HepG2 (cell line): ENCODE measurements at regions of chr14 and their contacts with region 1.

Region 1: DNA sequence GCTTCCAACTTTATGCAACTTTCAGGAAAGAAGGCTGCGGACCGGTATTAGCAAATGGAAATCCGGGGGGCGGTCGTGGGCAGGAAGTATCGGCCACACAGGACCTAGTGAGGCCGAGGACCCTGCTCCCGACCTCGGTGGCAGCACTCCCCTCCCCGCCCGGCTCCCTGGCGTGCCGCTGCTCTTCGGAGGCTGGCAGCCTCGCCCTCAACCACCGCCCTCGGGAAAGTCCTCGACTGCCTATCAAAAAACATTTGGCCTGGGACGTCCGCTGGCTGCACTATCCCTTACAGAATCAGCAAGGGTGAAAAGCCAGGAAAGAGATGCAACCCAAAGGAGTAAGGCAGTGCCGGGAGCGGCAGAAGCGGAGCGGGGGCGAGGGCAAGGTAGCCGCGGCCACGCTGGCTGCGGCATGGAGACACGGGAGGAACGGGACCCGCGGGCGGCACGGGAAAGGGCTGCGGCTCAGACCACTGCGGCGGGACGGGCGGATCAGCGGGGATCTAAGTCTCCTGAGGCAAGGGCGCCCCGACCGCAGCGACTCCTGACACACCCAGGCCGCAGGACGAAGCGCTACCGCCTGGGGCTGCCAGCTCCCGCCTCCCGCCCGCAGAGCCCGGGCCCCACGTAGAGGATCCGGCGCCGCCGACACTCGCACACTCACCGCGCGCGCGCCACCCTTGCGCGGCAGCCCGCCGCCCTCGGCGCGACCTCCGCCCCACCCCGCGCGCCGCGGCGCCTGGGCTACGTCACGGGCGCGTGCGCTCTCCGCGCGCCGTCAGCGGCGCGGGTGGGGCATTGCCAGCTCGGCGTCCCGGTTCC is at the starts of genes BBOF1 and ENTPD5:
- DNase-seq: peak; percentile 61
- ATAC-seq: peak; percentile 86
- H3K4me3 ChIP-seq: peak within 1 kb of the TSS; percentile 82 to 91 (median 89)
- H3K27ac ChIP-seq: peak within 1 kb of the TSS; percentile 96
- H3K4me1 ChIP-seq: peaks cover 70% of the 10 kb centered on the region
- H3K27me3 ChIP-seq: no peaks in the 10 kb centered on the region
- CTCF ChIP-seq: 0 out of 2 replicates have a peak, but pooled peaks have one; percentile 2
- EP300 ChIP-seq: no peak
- POLR2A ChIP-seq: peak; percentile 77 to 83; a peak in 3 of 4 replicates
- RAD21 ChIP-seq: no peak; the same call in none of the 2 replicates
- total RNA-seq, gene BBOF1: 2.3 and 2.4 TPM in 2 replicates
- total RNA-seq, gene ENTPD5: 20.6 and 33.8 TPM in 2 replicates

Region 2: GRCh38 chr14:73825551-73826188 is 193.1 kb before region 1 on chr14:
- CTCF ChIA-PET with region 1: no interaction called
- POLR2A ChIA-PET with region 1: no interaction called
- in situ Hi-C with region 1: no loop called
- intact Hi-C with region 1: no loop called
- DNase-seq: peak; percentile 69
- ATAC-seq: peak; percentile 92
- H3K4me3 ChIP-seq: no peak overlapping the region
- H3K27ac ChIP-seq: no peak overlapping the region
- H3K4me1 ChIP-seq: peaks cover 15% of the 10 kb centered on the region
- H3K27me3 ChIP-seq: peaks cover 0 to 2% of the 10 kb centered on the region in 2 experiments; a peak in 2 of 5 replicates
- CTCF ChIP-seq: peak; percentile 90
- EP300 ChIP-seq: no peak
- POLR2A ChIP-seq: no peak
- RAD21 ChIP-seq: peak; percentile 94

Region 3: GRCh38 chr14:73991092-73991491 is 27.7 kb before region 1 on chr14:
- CTCF ChIA-PET with region 1: no interaction called
- POLR2A ChIA-PET with region 1: interaction called, 70 read pairs
- in situ Hi-C with region 1: no loop called
- intact Hi-C with region 1: no loop called
- DNase-seq: no peak
- ATAC-seq: no peak
- H3K4me3 ChIP-seq: no peak overlapping the region
- H3K27ac ChIP-seq: no peak overlapping the region
- H3K4me1 ChIP-seq: peaks cover 78% of the 10 kb centered on the region
- H3K27me3 ChIP-seq: no peaks in the 10 kb centered on the region
- CTCF ChIP-seq: no peak
- EP300 ChIP-seq: no peak
- POLR2A ChIP-seq: no peak
- RAD21 ChIP-seq: no peak